ENCODE measurements at regions of chr2 and their contacts with region 1.

Region 1: GRCh38 chr2:86790676-86791572 is at the start of gene CD8A:
- DNase-seq: peak; percentile 72
- H3K4me3 ChIP-seq: peak within 1 kb of the TSS in 1 of 2 experiments; percentile 10; a peak in 1 of 4 replicates
- H3K27ac ChIP-seq: no peak within 1 kb of the TSS
- H3K4me1 ChIP-seq: peaks cover 0 to 5% of the 10 kb centered on the region in 2 experiments; a peak in 1 of 4 replicates
- H3K27me3 ChIP-seq: peaks cover 39% of the 10 kb centered on the region
- CTCF ChIP-seq: no peak
- EP300 ChIP-seq: no peak
- RAD21 ChIP-seq: no peak
- polyA plus RNA-seq, gene CD8A: 0.05 and 0.08 TPM in 2 replicates

Region 2: DNA sequence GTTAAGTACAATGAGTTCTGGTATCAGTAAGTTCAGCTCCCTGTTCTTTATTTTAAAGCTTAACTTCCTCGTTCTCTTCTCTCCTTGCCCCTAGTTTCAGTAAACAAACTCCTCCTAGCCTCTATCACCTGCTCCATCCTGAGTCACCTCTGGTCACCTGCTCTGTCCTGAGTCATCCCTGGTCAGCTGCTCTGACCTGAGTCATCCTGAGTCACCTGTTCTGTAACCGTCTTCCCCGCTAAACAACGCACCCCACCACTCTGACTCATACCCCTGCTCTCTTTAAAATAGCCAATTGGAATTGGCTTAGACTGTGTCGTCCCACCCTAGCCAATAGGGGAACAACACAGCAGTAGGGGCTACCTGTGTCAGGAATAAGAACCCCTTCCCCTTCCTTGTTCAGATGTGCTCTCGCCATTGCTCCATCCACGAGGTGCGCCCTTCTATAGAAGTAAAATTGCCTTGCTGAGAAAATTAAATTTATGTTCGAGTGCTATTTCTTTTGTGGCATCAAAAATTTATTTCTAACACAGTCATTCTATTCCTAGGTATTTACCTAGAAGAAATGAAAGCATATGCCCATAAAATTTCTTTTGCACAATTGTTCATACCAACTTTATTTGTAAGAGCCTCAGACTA is 95.8 kb before region 1 on chr2:
- CTCF ChIA-PET with region 1: no interaction called
- POLR2A ChIA-PET with region 1: no interaction called
- DNase-seq: no peak
- H3K4me3 ChIP-seq: no peak overlapping the region
- H3K27ac ChIP-seq: no peak overlapping the region
- H3K4me1 ChIP-seq: no peaks in the 10 kb centered on the region
- H3K27me3 ChIP-seq: no peaks in the 10 kb centered on the region
- CTCF ChIP-seq: no peak
- EP300 ChIP-seq: no peak
- RAD21 ChIP-seq: no peak

Region 3: GRCh38 chr2:86808315-86809161 is 17.6 kb after region 1 on chr2:
- CTCF ChIA-PET with region 1: interaction called, 11 read pairs
- POLR2A ChIA-PET with region 1: interaction called, 3 read pairs
- DNase-seq: peak; percentile 96
- H3K4me3 ChIP-seq: peak overlapping the region; percentile 53 to 70
- H3K27ac ChIP-seq: peak overlapping the region in 1 of 2 experiments; percentile 73; a peak in 2 of 4 replicates
- H3K4me1 ChIP-seq: peaks cover 0 to 11% of the 10 kb centered on the region in 2 experiments; a peak in 2 of 4 replicates
- H3K27me3 ChIP-seq: no peaks in the 10 kb centered on the region; the same call in 1 of the 2 replicates
- CTCF ChIP-seq: peak; percentile 89
- EP300 ChIP-seq: no peak
- RAD21 ChIP-seq: peak; percentile 93

Measured in SK-N-SH (cell line).